ENCODE measurements at regions of chr1 and their contacts with region 1.

Region 1: DNA sequence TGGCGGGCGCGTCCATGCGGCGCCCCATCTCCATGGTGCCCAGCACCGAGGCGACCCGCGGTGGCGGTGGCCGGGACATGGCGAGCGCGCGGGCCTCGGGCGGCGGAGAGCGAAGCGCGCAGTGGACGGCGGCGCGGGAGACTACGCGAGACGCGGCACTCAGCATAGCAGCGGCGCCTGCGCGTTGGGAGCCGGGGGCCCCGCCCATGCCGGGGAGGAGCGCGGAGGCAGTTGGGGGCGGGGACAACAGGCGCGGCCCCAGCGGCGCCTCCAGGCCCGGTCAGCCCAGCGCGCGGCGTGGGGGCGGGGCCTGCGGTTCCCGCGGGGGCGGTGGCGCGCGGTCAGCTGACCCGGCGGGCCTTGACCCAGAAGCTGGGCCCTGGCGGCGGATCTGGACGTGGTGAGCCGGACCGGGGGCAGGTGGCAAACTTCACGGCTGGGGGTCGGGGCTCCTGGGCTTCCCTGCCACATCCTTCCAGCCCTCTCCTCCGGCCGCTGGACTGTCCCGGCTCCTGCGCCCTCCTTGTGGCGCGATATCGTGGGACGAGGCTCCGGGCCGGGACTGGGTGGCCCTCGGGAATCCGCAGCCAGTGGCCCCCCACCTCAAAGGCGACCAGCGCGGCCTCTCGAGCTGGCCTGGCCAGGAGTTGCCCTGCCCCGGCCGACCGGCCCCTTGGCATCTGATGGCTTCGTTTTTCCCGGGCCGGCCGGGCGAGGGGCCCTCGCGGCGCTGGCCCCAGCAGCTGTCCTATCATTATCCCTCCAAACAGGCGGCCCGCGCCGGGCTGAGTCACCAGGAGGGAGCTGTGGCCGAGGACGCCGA is at the starts of genes AKR7A2 and SLC66A1:
- DNase-seq: peak; percentile 96
- H3K4me3 ChIP-seq: peak within 1 kb of the TSS; percentile 57 to 87 (median 69)
- H3K27ac ChIP-seq: peak within 1 kb of the TSS; percentile 84
- H3K4me1 ChIP-seq: peaks cover 21% of the 10 kb centered on the region
- H3K27me3 ChIP-seq: no peaks in the 10 kb centered on the region
- CTCF ChIP-seq: peak in 1 of 2 donors; percentile 3
- POLR2A ChIP-seq: peak; percentile 91
- total RNA-seq, gene AKR7A2: 45.2 and 48.0 TPM in 2 replicates
- total RNA-seq, gene SLC66A1: 15.3 and 17.6 TPM in 2 replicates

Region 2: GRCh38 chr1:19209990-19210771 is 102.0 kb before region 1 on chr1 and contains the start of gene UBR4:
- CTCF ChIA-PET with region 1: no interaction called
- POLR2A ChIA-PET with region 1: no interaction called
- dilution Hi-C with region 1: no loop called
- intact Hi-C with region 1: loop called (anchors 2 kb)
- DNase-seq: peak; percentile 96
- H3K4me3 ChIP-seq: peak within 1 kb of the TSS; percentile 26 to 94 (median 81)
- H3K27ac ChIP-seq: peak within 1 kb of the TSS; percentile 80
- H3K4me1 ChIP-seq: peaks cover 22% of the 10 kb centered on the region
- H3K27me3 ChIP-seq: no peaks in the 10 kb centered on the region
- CTCF ChIP-seq: no peak
- POLR2A ChIP-seq: peak; percentile 52
- total RNA-seq, gene UBR4: 146 and 150 TPM in 2 replicates

Region 3: DNA sequence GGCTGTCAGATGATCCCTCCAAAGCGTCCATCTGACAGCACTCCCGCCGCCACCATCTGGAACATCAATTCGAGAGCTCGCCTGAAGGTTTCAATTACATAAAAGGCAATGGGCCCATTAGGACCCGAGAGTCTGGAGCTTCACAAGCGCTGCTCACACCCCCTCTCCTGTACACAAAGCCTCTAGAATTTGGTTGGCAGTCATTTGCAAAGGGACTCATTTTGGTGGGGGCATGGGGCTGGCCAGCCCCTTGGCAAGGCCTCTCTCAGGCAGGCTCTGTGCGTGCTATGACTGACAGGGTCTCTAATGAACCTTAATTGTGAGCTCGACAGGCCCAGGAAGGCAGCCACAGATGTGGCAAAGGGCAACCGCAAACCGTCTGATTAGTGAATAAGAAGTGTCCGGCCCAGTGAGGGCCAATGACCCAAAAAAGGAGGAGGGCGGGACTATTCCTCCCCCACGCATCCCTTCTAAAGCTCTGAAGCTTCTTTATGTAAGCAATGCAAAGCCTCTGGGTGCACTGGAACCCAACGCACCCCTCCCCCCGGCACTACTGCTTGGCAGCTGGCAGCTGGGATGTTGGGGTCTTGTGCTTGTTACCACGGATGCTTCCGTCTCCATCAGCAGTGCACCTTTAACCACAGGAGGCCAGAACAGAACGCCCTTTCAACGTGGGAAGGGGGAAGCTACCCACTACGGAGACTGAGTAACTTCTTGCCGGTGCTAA is 93.8 kb after region 1 on chr1:
- CTCF ChIA-PET with region 1: no interaction called
- POLR2A ChIA-PET with region 1: no interaction called
- dilution Hi-C with region 1: no loop called
- intact Hi-C with region 1: no loop called
- DNase-seq: no peak
- H3K4me3 ChIP-seq: no peak overlapping the region
- H3K27ac ChIP-seq: no peak overlapping the region
- H3K4me1 ChIP-seq: no peaks in the 10 kb centered on the region
- H3K27me3 ChIP-seq: no peaks in the 10 kb centered on the region
- CTCF ChIP-seq: no peak
- POLR2A ChIP-seq: no peak

Region 4: DNA sequence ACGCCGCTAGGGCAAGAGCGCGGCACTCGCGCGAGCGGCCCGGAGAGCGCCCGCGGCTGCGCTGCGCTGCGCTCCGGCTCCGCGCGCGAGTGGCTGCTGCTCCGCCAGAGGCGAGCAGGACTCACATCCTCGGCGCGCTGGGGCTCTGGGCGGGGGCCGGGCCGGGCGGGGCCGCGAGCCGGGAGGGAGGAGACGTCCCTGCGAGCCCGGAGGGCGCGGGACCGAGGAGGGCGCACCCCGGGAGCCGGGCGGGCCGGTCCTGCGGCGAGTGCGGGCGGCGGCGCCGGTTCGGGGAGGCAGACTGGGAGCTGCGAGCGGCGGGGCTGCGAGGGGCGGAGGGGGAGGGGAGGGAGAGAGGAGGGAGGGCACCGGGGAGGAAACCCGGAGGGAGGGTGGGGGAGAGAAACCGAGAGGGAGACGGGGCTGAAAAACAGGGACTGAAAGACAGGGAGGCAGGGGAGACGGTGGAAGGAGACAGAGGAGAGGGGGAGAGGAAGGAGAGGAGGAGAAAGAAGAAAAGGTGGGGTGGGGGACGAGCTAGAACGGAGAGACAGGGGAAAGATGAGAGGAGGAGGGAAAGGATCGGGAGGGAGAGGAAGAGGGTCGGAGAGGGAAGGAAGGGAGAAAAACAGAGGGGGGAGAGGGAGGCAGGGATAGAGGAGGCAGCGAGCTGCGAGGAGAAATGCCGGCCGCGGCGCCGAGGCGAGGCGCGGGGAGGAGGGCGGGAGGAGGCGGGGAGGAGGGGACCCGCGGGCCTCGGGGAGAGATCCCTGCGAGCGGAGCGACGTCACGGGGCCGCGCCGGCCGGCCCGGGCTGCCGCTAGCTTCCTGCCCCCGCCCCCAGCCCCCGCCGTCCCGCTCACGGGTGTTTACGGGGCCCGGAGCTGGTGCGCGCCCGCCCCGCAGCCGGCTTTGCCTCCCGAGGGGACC is 1173.6 kb after region 1 on chr1 and contains the start of gene CAMK2N1:
- CTCF ChIA-PET with region 1: no interaction called
- POLR2A ChIA-PET with region 1: no interaction called
- dilution Hi-C with region 1: no loop called
- intact Hi-C with region 1: loop called (anchors 5 kb)
- DNase-seq: peak; percentile 44
- H3K4me3 ChIP-seq: peak within 1 kb of the TSS; percentile 54 to 78 (median 56)
- H3K27ac ChIP-seq: peak within 1 kb of the TSS; percentile 13
- H3K4me1 ChIP-seq: peaks cover 12% of the 10 kb centered on the region
- H3K27me3 ChIP-seq: peaks cover 0 to 3% of the 10 kb centered on the region in 2 experiments
- CTCF ChIP-seq: no peak
- POLR2A ChIP-seq: peak; percentile 54
- total RNA-seq, gene CAMK2N1: 11.9 and 18.3 TPM in 2 replicates

Measured in endothelial cell of umbilical vein (primary cell).